H1 (cell line): ENCODE measurements at regions of chr21 and their contacts with region 1.

Region 1: DNA sequence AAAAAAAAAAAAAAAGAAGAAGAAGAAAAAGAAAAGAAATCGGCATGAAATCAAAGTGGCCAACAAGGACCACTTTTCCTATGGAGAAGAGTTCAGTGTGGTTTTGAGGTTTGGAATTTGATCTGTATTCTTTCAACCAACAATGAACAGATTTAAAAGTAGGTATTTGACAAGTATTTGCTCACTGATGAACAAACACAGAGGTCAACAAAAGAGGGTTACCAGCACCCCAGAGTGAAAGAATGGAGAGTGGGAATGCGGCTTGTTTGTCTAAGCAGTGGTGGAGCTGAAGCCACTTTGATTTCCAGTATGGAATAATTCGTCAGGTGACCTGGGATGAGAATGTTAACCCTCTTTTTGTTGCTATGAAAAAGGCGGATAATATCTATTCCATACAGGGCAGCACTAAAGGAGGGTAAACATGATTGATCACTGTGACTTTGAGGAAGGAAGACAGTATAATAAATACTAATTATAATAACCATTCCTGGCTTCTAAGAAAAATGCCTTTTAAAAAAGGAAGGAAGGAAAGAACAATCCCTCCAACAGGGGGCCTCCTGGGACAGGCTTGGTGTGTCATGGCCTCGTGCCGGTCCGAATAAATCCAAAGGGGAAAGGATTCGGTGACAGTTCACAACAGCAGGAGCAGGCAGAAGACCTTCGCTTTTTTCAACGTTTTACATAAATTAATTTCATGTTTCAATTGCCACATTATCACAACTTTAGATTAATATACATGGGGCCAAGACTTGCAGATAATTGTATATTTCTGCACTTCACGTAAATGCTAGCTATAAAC is 37.2 kb upstream of the SIM2 start:
- DNase-seq: no peak
- H3K4me3 ChIP-seq: no peak overlapping the region
- H3K27ac ChIP-seq: no peak overlapping the region
- H3K4me1 ChIP-seq: no peaks in the 10 kb centered on the region; a peak in 1 of 7 replicates
- H3K27me3 ChIP-seq: no peaks in the 10 kb centered on the region
- CTCF ChIP-seq: peak; percentile 56 to 62 (median 56)
- EP300 ChIP-seq: no peak
- POLR2A ChIP-seq: no peak
- RAD21 ChIP-seq: peak; percentile 61 to 62

Region 2: GRCh38 chr21:36671836-36672235 is 10.1 kb after region 1 on chr21:
- CTCF ChIA-PET with region 1: interaction called, 10 read pairs
- POLR2A ChIA-PET with region 1: no interaction called
- DNase-seq: no peak
- H3K4me3 ChIP-seq: no peak overlapping the region
- H3K27ac ChIP-seq: no peak overlapping the region
- H3K4me1 ChIP-seq: no peaks in the 10 kb centered on the region; a peak in 2 of 7 replicates
- H3K27me3 ChIP-seq: no peaks in the 10 kb centered on the region; a peak in 2 of 7 replicates
- CTCF ChIP-seq: no peak
- EP300 ChIP-seq: no peak
- POLR2A ChIP-seq: no peak
- RAD21 ChIP-seq: no peak

Region 3: GRCh38 chr21:36684957-36685714 is 23.4 kb after region 1 on chr21:
- CTCF ChIA-PET with region 1: interaction called, 14 read pairs
- POLR2A ChIA-PET with region 1: no interaction called
- DNase-seq: no peak
- H3K4me3 ChIP-seq: no peak overlapping the region
- H3K27ac ChIP-seq: no peak overlapping the region
- H3K4me1 ChIP-seq: no peaks in the 10 kb centered on the region
- H3K27me3 ChIP-seq: peaks cover 8 to 10% (median 10%) of the 10 kb centered on the region in 4 experiments
- CTCF ChIP-seq: no peak
- EP300 ChIP-seq: no peak
- POLR2A ChIP-seq: no peak
- RAD21 ChIP-seq: no peak

Region 4: DNA sequence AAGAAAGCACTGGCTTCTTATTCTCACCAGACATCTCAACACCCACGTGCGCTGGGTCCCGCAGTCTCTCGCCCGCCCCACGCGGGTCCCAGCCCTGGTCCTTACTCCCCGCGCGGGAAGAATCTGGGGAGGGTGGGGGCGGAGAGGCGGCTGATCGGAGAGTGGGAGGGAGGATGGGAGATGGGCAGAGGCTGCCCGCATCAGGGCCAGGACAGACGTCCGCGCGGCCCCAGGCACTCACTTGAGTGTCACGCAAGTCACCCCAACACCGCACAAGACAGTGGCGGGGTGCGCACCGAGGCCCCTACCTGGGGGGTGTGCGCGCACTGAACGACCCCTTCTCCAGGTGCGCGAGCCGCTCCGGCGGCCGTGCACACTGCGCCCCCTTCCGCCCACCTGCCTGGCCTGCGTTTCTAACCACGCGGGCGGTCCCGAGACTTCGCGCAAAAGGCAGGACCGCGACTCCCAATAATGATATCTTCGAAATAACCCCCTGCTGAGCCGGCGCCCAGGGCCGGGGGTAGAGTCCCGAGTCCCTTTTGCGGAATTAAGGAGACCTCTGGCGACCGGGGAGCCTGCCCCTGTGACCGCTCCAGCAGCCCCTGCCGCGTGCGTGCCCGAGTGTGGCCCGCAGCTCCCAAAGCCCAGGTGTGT is 31.3 kb after region 1 on chr21:
- CTCF ChIA-PET with region 1: interaction called, 13 read pairs
- POLR2A ChIA-PET with region 1: interaction called, 5 read pairs
- DNase-seq: peak in 1 of 2 experiments; percentile 83
- H3K4me3 ChIP-seq: peak overlapping the region in 1 of 4 experiments; percentile 54; a peak in 3 of 8 replicates
- H3K27ac ChIP-seq: no peak overlapping the region
- H3K4me1 ChIP-seq: peaks cover 5 to 32% (median 20%) of the 10 kb centered on the region in 4 experiments
- H3K27me3 ChIP-seq: peaks cover 85 to 89% (median 88%) of the 10 kb centered on the region in 4 experiments
- CTCF ChIP-seq: peak in 2 of 3 experiments; percentile 60 to 65; a peak in 3 of 4 replicates
- EP300 ChIP-seq: no peak
- POLR2A ChIP-seq: no peak
- RAD21 ChIP-seq: peak; percentile 58 to 59